Natural killer cell (primary cell): ENCODE measurements at regions of chr11 and their contacts with region 1.

Region 1: DNA sequence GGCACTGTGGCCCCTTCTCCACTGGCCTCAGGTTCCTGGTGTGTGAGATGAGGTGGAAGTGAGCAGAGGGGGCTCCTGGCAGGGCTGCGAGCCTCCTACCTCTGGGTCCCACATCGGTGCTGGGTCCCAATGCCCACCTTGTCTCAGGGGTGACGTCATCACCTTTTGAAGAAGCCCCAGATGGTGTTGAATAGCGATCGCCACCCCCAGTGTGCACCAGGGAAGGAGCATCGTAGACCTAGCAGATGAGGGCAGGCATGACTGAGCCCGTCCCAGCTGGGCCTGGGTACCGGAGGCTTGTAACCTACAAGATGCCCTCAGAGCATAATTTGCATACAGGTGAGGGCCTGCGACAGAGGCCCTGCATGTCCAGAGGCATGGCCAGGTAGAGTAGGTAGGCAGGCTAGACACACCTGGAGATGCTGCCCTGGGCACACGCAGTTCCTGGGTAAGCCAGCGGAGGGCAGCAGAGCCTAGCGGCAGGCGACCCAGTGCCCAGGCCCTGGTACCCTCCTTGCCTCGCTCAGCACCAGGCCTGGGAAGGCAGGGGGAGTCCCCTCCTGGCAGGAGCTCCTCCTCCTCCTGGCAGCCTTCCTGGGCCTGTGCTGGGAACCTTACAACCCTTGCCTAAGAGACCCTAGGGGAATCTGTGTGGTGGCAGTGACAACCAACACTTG is 52.5 kb downstream of the TPCN2 start:
- DNase-seq: peak; percentile 67 to 88
- ATAC-seq: peak; percentile 74 to 99 (median 97)
- H3K4me3 ChIP-seq: no peak overlapping the region
- H3K4me3 Mint-ChIP-seq: no peak overlapping the region
- H3K27ac ChIP-seq: no peak overlapping the region
- H3K27ac Mint-ChIP-seq: no peak overlapping the region
- H3K4me1 ChIP-seq: no peaks in the 10 kb centered on the region
- H3K4me1 Mint-ChIP-seq: no peaks in the 10 kb centered on the region
- H3K27me3 ChIP-seq: peaks cover 3% of the 10 kb centered on the region
- H3K27me3 Mint-ChIP-seq: peaks cover 0 to 5% of the 10 kb centered on the region in 2 donors
- CTCF ChIP-seq: peak; percentile 82

Region 2: DNA sequence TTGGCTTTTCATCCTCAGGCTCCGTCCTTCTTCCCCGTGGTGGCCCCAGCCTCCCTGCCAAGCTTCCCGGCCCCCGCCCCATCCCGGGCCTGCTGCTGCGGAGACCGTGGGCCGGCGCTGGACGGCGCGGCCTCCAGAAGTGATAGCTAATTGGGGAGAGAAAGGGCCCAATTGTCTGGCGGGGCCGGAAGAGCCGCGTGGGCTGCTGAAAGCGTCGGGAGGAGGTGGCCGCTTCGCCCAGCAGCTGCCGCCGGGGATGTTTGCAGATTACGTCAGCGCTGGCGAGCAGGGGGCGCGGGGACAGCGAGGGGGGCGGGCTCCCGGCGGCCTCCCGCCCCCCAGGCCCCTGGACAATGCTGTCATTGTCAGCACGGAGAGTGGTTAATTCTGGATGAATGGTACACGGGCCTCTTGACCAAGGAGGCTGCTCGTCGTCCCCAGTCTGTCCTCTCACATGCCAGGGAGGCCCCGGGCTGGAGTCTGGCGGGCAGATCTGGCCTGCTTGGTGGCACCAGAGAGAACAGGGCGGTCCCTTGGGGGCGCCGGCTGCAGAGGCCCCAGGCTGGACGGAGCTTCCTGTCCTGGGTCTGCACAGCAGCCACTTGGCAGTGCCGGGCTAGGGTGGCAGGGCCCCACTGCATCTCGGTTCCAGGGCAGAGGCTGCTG is 56.0 kb after region 1 on chr11:
- intact Hi-C with region 1: no loop called
- DNase-seq: no peak
- ATAC-seq: no peak
- H3K4me3 ChIP-seq: no peak overlapping the region
- H3K4me3 Mint-ChIP-seq: no peak overlapping the region
- H3K27ac ChIP-seq: no peak overlapping the region
- H3K27ac Mint-ChIP-seq: no peak overlapping the region
- H3K4me1 ChIP-seq: no peaks in the 10 kb centered on the region
- H3K4me1 Mint-ChIP-seq: no peaks in the 10 kb centered on the region
- H3K27me3 ChIP-seq: peaks cover 2% of the 10 kb centered on the region
- H3K27me3 Mint-ChIP-seq: peaks cover 0 to 4% of the 10 kb centered on the region in 2 donors
- CTCF ChIP-seq: no peak

Region 3: DNA sequence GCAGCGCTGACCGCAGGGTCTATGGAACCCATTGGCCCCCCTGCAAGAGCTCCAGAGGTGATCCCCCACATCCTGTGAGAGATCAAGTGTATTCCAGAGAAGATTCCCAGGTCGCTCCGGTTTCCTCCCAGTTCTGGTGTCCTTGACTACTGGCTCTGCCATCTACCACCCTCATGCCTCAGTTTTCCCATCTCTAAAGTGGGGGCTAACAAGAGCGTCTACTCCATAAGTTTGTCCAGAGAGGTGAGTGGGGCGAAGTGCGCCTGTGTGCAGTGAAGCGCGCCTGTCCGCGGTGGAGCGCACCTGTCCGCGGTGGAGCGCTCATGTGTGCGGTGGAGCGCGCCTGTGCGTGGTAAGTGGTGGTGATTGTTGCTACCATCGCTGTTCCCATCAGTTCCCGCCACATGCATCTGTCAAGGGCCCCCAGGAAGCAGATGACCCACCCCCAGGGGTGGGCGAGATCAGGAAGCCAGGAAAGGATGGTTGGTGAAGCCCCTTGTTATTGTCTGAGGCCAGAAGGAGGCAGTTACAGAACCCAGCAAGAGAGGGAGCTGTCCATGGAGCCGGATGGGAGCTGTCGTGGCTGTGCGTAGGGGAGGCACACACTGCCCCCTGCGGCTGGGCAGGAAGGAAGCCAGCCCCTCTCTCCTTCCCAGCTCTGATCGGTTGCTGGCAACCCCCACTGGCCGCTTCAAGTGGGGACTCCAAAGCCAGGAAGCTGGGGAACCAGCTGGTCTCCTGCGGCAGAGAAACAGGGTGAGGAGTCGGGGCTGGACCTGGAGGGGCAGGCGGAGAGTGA is 791.2 kb after region 1 on chr11:
- intact Hi-C with region 1: loop called (anchors 5 kb)
- DNase-seq: no peak
- ATAC-seq: no peak
- H3K4me3 ChIP-seq: no peak overlapping the region
- H3K4me3 Mint-ChIP-seq: no peak overlapping the region
- H3K27ac ChIP-seq: no peak overlapping the region
- H3K27ac Mint-ChIP-seq: no peak overlapping the region
- H3K4me1 ChIP-seq: peaks cover 2% of the 10 kb centered on the region
- H3K4me1 Mint-ChIP-seq: peaks cover 0 to 8% of the 10 kb centered on the region in 2 donors
- H3K27me3 ChIP-seq: no peaks in the 10 kb centered on the region
- H3K27me3 Mint-ChIP-seq: peaks cover 6 to 14% of the 10 kb centered on the region in 2 donors
- CTCF ChIP-seq: no peak